Dorsolateral prefrontal cortex (tissue), 120 donors: ENCODE measurements at regions of chr11 and their contacts with region 1.

Region 1: GRCh38 chr11:111230122-111230465 is 15.4 kb upstream of the POU2AF2 start:
- DNase-seq: no peak
- H3K4me3 ChIP-seq: peak overlapping the region in 58 of 59 donors; percentile 36 to 82 (median 64)
- H3K27ac ChIP-seq: peak overlapping the region in 17 of 59 donors; percentile 33 to 85 (median 64)
- H3K27me3 ChIP-seq: no peaks in the 10 kb centered on the region
- CTCF ChIP-seq: no peak

Region 2: GRCh38 chr11:110447897-110448745 is 782.0 kb before region 1 on chr11:
- intact Hi-C with region 1: loop called in 1 of 2 experiments (anchors 5 kb)
- DNase-seq: no peak
- H3K4me3 ChIP-seq: no peak overlapping the region
- H3K27ac ChIP-seq: no peak overlapping the region
- H3K27me3 ChIP-seq: no peaks in the 10 kb centered on the region
- CTCF ChIP-seq: peak in 55 of 56 donors; percentile 33 to 68 (median 52)

Region 3: DNA sequence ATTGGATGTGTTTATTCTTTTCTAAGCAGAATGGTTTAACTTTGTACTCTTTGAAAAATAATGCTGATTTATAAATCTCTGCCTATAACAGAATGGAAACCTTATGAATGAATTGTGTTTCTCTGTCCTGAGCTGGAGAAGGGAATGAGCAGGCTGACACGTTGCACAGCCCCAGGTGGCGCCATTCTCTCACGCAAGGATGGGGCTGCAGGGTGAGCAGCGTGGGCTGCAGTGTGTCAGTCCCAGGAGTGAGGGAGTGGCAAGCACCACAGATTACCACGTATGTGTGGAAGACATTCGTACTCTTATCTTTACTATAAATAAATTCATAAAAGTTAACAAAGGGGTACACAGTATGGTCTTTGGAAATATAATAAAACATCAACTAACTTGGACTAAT is 766.9 kb before region 1 on chr11:
- intact Hi-C with region 1: loop called in 1 of 2 experiments (anchors 2 kb)
- DNase-seq: peak in 7 of 10 donors; percentile 32 to 63 (median 54)
- H3K4me3 ChIP-seq: no peak overlapping the region
- H3K27ac ChIP-seq: no peak overlapping the region
- H3K27me3 ChIP-seq: no peaks in the 10 kb centered on the region
- CTCF ChIP-seq: peak in 51 of 56 donors; percentile 9 to 69 (median 45)

Region 4: GRCh38 chr11:110479108-110480101 is 750.7 kb before region 1 on chr11:
- intact Hi-C with region 1: loop called in 1 of 2 experiments (anchors 10 kb)
- DNase-seq: peak in 1 of 10 donors; percentile 26
- H3K4me3 ChIP-seq: peak overlapping the region in 15 of 59 donors; percentile 1 to 40 (median 7)
- H3K27ac ChIP-seq: peak overlapping the region in 58 of 59 donors; percentile 6 to 85 (median 63)
- H3K27me3 ChIP-seq: no peaks in the 10 kb centered on the region
- CTCF ChIP-seq: no peak

Region 5: GRCh38 chr11:110711776-110712658 is 518.1 kb before region 1 on chr11 and contains the start of gene ARHGAP20:
- intact Hi-C with region 1: loop called (anchors 2 to 5 kb)
- DNase-seq: peak in 9 of 10 donors; percentile 35 to 81 (median 62)
- H3K4me3 ChIP-seq: peak within 1 kb of the TSS; percentile 56 to 91 (median 77)
- H3K27ac ChIP-seq: peak within 1 kb of the TSS in 58 of 59 donors; percentile 29 to 94 (median 82)
- H3K27me3 ChIP-seq: no peaks in the 10 kb centered on the region
- CTCF ChIP-seq: peak in 2 of 56 donors; percentile 5 to 11
- total RNA-seq, gene ARHGAP20: 7.1 to 28.5 (median 18.2) TPM

Region 6: DNA sequence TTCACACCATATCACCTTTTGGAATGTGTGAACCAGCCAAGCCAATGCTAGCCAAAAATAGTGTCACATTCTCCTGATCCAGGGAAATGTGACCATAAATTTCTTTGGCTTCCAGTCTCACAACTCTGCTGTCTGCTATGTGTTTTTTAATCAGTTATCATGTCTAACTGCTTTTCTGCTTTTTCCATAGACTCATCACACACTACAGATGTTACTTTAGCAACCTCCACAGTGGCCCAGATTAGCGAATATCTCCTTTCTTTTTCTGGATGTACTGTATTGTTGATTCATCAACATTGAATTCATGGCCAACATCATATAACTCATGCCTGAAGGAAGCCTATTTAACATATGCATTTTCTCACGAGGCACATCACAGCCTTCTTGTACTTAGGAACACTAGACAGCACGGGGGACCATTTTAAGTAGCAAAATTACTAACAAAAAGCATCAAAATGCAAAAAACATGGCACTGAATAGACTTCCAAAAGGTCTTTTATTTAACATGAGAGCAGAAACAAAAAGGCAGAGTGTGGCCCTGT is 57.7 kb before region 1 on chr11:
- intact Hi-C with region 1: loop called in 1 of 2 experiments (anchors 2 kb)
- DNase-seq: no peak
- H3K4me3 ChIP-seq: no peak overlapping the region
- H3K27ac ChIP-seq: no peak overlapping the region
- H3K27me3 ChIP-seq: no peaks in the 10 kb centered on the region
- CTCF ChIP-seq: no peak